ENCODE measurements at regions of chr16 and their contacts with region 1.

Region 1: GRCh38 chr16:88785106-88785924 is at the start of gene PIEZO1:
- DNase-seq: no peak
- ATAC-seq: peak; percentile 75
- H3K4me3 ChIP-seq: peak within 1 kb of the TSS; percentile 69 to 82
- H3K27ac ChIP-seq: peak within 1 kb of the TSS; percentile 91
- H3K4me1 ChIP-seq: peaks cover 35 to 46% of the 10 kb centered on the region in 2 experiments
- H3K27me3 ChIP-seq: no peaks in the 10 kb centered on the region
- CTCF ChIP-seq: peak in 2 of 3 experiments; percentile 80 to 92; a peak in 4 of 6 replicates
- POLR2A ChIP-seq: peak; percentile 96
- RAD21 ChIP-seq: no peak
- total RNA-seq, gene PIEZO1: 224 TPM

Region 2: GRCh38 chr16:88743693-88744576 is 41.4 kb before region 1 on chr16:
- CTCF ChIA-PET with region 1: interaction called, 4 read pairs
- POLR2A ChIA-PET with region 1: interaction called, 3 read pairs
- RAD21 ChIA-PET with region 1: no interaction called
- intact Hi-C with region 1: loop called (anchors 2 kb)
- DNase-seq: peak; percentile 56
- ATAC-seq: peak; percentile 76
- H3K4me3 ChIP-seq: no peak overlapping the region
- H3K27ac ChIP-seq: peak overlapping the region; percentile 40; the same call in 1 of the 2 replicates
- H3K4me1 ChIP-seq: peaks cover 0 to 16% of the 10 kb centered on the region in 2 experiments; a peak in 2 of 4 replicates
- H3K27me3 ChIP-seq: no peaks in the 10 kb centered on the region
- CTCF ChIP-seq: peak; percentile 81 to 98 (median 97)
- POLR2A ChIP-seq: no peak
- RAD21 ChIP-seq: peak; percentile 72

Region 3: GRCh38 chr16:88770461-88771293 is 14.6 kb before region 1 on chr16:
- CTCF ChIA-PET with region 1: interaction called, 6 read pairs
- POLR2A ChIA-PET with region 1: interaction called, 22 read pairs
- RAD21 ChIA-PET with region 1: interaction called in 1 of 2 experiments, 3 read pairs
- intact Hi-C with region 1: no loop called
- DNase-seq: peak; percentile 78
- ATAC-seq: peak; percentile 82
- H3K4me3 ChIP-seq: peak overlapping the region; percentile 34 to 37
- H3K27ac ChIP-seq: peak overlapping the region; percentile 92
- H3K4me1 ChIP-seq: peaks cover 63 to 99% of the 10 kb centered on the region in 2 experiments
- H3K27me3 ChIP-seq: no peaks in the 10 kb centered on the region
- CTCF ChIP-seq: no peak
- POLR2A ChIP-seq: no peak
- RAD21 ChIP-seq: no peak

Region 4: DNA sequence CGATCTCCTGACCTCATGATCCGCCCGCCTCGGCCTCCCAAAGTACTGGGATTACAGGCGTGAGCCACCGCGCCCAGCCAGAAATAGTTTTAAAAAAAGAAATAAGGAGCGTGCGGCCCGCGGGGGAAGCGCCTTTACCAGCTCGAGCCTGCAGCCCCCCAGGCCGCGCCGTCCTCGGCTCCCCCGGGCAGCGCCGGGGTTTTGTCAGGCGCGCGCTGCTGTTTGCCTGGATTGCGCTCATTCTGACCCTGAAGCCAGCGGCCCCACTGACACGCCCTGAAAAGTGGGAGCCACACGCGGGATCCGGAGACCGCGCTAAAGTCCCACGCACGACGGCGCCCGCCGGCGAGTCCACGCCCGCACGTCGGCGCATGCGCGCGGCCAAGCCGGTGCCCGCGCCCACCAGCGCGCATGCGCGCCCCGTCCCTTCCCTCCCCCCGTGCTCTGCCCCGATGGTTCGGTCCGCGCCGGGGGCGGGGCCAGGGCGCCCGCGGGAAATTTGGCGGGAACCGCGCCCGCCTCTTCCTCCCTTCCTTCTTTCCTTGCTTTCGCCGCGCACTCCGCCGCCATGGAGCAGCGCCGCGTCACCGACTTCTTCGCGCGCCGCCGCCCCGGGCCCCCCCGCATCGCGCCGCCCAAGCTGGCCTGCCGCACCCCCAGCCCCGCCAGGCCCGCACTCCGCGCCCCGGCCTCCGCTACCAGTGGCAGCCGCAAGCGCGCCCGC is 18.1 kb after region 1 on chr16 and contains the start of gene CDT1:
- CTCF ChIA-PET with region 1: interaction called, 4 read pairs
- POLR2A ChIA-PET with region 1: interaction called, 8 read pairs
- RAD21 ChIA-PET with region 1: no interaction called
- intact Hi-C with region 1: loop called (anchors 2 kb)
- DNase-seq: peak; percentile 61
- ATAC-seq: peak; percentile 42
- H3K4me3 ChIP-seq: peak within 1 kb of the TSS; percentile 85 to 99
- H3K27ac ChIP-seq: peak within 1 kb of the TSS; percentile 100
- H3K4me1 ChIP-seq: peaks cover 16 to 43% of the 10 kb centered on the region in 2 experiments
- H3K27me3 ChIP-seq: no peaks in the 10 kb centered on the region
- CTCF ChIP-seq: no peak
- POLR2A ChIP-seq: peak; percentile 76
- RAD21 ChIP-seq: no peak
- total RNA-seq, gene CDT1: 160 TPM

Region 5: DNA sequence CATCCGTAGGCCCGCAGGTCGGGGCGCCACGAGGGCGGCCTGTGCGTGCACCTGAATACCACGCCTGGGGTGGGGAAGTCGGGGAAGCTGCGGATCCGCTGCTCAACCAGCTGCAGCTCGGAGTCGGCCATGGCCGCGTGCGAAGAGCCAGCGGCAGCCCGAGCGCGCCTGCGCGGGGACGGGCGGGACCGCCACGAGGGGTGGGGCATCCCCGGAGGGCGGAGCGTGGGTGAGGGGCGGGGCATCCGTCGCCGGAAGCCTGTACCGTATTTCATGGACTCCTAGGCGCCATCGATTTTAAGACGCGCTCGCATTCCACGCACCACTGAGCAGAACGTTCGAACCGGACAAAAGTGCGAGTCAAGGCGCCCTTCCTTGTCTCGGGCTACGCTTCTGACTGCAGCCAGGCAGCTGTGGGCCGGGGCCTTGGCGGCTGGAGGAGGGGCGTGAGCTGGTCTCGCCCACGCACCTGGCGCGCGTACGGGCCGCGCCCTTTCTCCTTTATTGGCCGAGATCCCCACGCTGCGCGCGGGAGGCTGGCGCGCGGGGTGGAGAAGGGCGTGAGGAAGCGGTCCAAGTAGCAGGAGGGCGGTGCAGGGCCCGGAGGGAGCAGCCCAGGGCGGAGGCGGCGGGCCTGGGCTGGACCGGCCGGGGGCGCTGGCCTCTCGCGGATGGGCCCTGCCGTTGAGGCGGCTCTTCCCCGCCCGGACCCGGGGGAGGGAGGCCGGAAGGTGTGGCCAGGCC is 26.6 kb after region 1 on chr16 and contains the start of gene APRT:
- CTCF ChIA-PET with region 1: interaction called, 4 read pairs
- POLR2A ChIA-PET with region 1: interaction called, 16 read pairs
- RAD21 ChIA-PET with region 1: no interaction called
- intact Hi-C with region 1: no loop called
- DNase-seq: peak; percentile 91
- ATAC-seq: peak; percentile 64
- H3K4me3 ChIP-seq: peak within 1 kb of the TSS; percentile 72 to 75
- H3K27ac ChIP-seq: peak within 1 kb of the TSS; percentile 100
- H3K4me1 ChIP-seq: peaks cover 22 to 59% of the 10 kb centered on the region in 2 experiments
- H3K27me3 ChIP-seq: no peaks in the 10 kb centered on the region
- CTCF ChIP-seq: peak in 2 of 3 experiments; percentile 35; a peak in 4 of 6 replicates
- POLR2A ChIP-seq: peak; percentile 77
- RAD21 ChIP-seq: no peak
- total RNA-seq, gene APRT: 311 TPM

Measured in HCT116 (cell line).